Transverse colon (tissue), 4 donors: ENCODE measurements at regions of chr22 and their contacts with region 1.

Region 1: DNA sequence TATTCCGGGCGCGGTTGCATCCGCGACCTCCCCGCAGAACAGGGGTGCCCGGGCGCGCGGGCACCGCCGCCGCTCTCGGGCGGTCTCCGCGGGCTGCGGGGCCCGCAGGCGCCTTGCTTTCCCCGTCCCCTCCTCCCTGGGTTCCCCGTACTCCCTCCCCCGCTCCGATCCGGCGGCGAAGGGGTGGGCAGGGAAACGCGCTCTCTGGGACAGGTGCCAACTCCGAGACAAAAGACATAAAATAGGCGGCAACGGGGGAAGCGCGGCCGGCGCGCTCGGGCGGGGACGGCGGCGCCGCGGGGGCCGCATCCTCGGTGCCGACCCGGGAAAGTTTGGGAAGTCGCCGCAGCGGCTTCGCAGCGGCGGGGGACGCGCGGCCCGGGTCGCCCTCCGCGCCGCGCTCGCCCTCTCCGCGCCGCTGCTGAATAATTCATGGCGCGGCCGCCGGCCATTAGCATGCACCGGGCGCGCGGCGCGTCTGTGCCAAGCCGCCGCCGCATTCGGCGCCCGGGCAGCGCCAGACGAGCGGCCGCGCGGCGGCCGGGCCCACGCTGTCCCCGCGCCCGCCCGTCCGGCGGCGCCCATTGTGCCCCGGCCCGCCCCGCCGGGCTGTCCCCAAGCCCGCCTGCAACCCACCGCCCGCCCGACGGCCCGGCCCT is 78.7 kb upstream of the PPARA start:
- DNase-seq: peak; percentile 89
- H3K4me3 ChIP-seq: peak overlapping the region; percentile 73 to 90 (median 80)
- H3K27ac ChIP-seq: peak overlapping the region; percentile 98 to 99 (median 98)
- H3K4me1 ChIP-seq: peaks cover 32 to 55% (median 51%) of the 10 kb centered on the region in 4 donors
- H3K27me3 ChIP-seq: no peaks in the 10 kb centered on the region
- CTCF ChIP-seq: no peak
- EP300 ChIP-seq: peak; percentile 39
- POLR2A ChIP-seq: no peak

Region 2: GRCh38 chr22:46006379-46007002 is 65.1 kb before region 1 on chr22:
- in situ Hi-C with region 1: no loop called
- intact Hi-C with region 1: loop called (anchors 10 kb)
- DNase-seq: peak; percentile 92
- H3K4me3 ChIP-seq: peak overlapping the region in 1 of 4 donors; percentile 11
- H3K27ac ChIP-seq: peak overlapping the region; percentile 83 to 92 (median 88)
- H3K4me1 ChIP-seq: peaks cover 19 to 34% (median 24%) of the 10 kb centered on the region in 4 donors
- H3K27me3 ChIP-seq: no peaks in the 10 kb centered on the region
- CTCF ChIP-seq: peak; percentile 97 to 99 (median 98)
- EP300 ChIP-seq: no peak
- POLR2A ChIP-seq: no peak

Region 3: GRCh38 chr22:46054091-46055073 is 17.2 kb before region 1 on chr22:
- in situ Hi-C with region 1: no loop called
- intact Hi-C with region 1: loop called (anchors 2 kb)
- DNase-seq: peak; percentile 70
- H3K4me3 ChIP-seq: peak overlapping the region; percentile 59 to 88 (median 69)
- H3K27ac ChIP-seq: peak overlapping the region; percentile 97 to 100 (median 99)
- H3K4me1 ChIP-seq: peaks cover 48 to 76% (median 70%) of the 10 kb centered on the region in 4 donors
- H3K27me3 ChIP-seq: no peaks in the 10 kb centered on the region
- CTCF ChIP-seq: no peak
- EP300 ChIP-seq: no peak
- POLR2A ChIP-seq: peak; percentile 45